K562 (cell line): ENCODE measurements at regions of chr7 and their contacts with region 1.

Region 1: DNA sequence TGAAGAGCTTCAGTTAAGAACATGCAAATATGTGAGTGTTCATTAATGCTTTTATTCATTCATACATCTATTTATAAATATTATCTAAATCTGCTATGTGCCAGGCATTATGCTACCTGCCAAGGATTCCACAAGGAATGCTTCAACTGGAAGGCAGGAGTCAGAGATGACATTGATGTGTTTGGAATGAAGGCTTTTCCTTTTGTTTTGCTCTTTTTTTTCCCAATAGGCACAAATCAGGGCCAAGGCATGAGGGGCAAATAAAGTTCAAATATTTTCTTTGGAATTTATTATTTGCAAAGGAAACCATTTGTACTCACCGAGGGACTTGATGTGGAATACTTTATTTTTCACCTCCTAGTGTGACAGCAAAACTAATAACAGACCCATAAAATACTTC is 530.3 kb downstream of the ARL4A start:
- DNase-seq: no peak
- ATAC-seq: no peak
- H3K4me3 ChIP-seq: no peak overlapping the region
- H3K27ac ChIP-seq: no peak overlapping the region
- H3K4me1 ChIP-seq: no peaks in the 10 kb centered on the region
- H3K27me3 ChIP-seq: no peaks in the 10 kb centered on the region
- CTCF ChIP-seq: no peak
- EP300 ChIP-seq: no peak
- POLR2A ChIP-seq: no peak
- RAD21 ChIP-seq: no peak

Region 2: GRCh38 chr7:13185139-13185538 is 32.6 kb before region 1 on chr7:
- CTCF ChIA-PET with region 1: interaction called, 5 read pairs
- POLR2A ChIA-PET with region 1: no interaction called
- in situ Hi-C with region 1: no loop called
- intact Hi-C with region 1: loop called (anchors 1 kb)
- DNase-seq: no peak
- ATAC-seq: no peak
- H3K4me3 ChIP-seq: no peak overlapping the region
- H3K27ac ChIP-seq: no peak overlapping the region
- H3K4me1 ChIP-seq: no peaks in the 10 kb centered on the region; a peak in 1 of 5 replicates
- H3K27me3 ChIP-seq: no peaks in the 10 kb centered on the region
- CTCF ChIP-seq: no peak
- EP300 ChIP-seq: no peak
- POLR2A ChIP-seq: no peak
- RAD21 ChIP-seq: no peak

Region 3: DNA sequence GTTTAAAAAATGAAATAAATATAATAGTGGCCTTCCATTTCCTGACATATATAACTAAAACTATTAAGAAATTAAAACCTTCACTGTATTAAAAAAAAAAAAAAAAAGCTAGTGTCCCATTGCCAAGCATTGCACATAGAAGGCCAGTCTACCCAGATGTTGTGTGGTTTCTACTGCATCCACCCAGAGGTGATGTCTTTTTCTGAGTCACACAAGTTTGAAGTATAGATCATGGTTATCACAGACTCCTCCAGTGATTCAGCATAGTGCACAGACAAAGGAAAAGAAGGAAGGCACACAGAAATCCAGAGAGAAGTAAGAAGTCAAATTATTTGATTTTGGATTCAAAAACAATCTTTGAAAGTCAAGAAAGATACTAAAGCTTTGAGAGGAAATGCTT is 342.7 kb after region 1 on chr7:
- CTCF ChIA-PET with region 1: no interaction called
- POLR2A ChIA-PET with region 1: no interaction called
- in situ Hi-C with region 1: no loop called
- intact Hi-C with region 1: no loop called
- DNase-seq: no peak
- ATAC-seq: no peak
- H3K4me3 ChIP-seq: no peak overlapping the region
- H3K27ac ChIP-seq: no peak overlapping the region
- H3K4me1 ChIP-seq: no peaks in the 10 kb centered on the region
- H3K27me3 ChIP-seq: no peaks in the 10 kb centered on the region
- CTCF ChIP-seq: no peak
- EP300 ChIP-seq: no peak
- POLR2A ChIP-seq: no peak
- RAD21 ChIP-seq: no peak